ENCODE measurements at regions of chr5 and their contacts with region 1.

Region 1: DNA sequence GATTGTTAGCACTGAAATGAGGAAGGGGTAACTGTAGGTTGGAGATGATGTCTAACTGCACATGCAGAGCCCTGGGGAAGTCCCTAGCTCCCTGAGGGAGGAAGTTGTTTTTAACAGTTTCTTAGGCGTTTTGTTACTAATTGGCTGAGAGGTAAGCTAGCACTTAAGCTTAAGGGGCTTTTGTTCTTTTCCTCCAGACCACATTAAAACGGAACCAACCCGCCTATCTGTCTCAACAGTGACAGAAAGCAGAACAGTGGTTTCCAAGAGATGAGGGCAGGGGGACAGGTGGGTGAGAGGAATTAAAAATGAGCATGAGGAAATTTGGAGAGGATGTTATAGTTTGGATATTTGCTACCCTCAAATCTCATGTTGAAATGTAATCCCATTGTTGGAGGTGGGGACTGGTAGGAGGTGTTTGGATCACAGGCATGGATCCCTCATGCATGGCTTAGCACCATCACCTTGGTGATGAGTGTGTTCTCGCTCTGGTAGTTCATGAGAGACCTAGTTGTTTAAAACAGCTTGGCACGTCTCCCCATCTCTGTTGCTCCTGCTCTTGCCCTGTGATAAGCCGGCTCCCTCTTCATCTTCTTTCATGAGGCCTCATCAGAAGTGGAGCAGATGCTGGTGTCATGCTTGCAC is 38.9 kb downstream of the LYRM7 start:
- DNase-seq: peak; percentile 74
- ATAC-seq: peak; percentile 96
- H3K4me3 Mint-ChIP-seq: peak overlapping the region; percentile 76
- H3K27ac Mint-ChIP-seq: peak overlapping the region; percentile 97
- H3K4me1 Mint-ChIP-seq: peaks cover 68% of the 10 kb centered on the region
- H3K27me3 Mint-ChIP-seq: no peaks in the 10 kb centered on the region
- CTCF ChIP-seq: no peak

Region 2: GRCh38 chr5:131170540-131171275 is 38.9 kb before region 1 on chr5 and contains the start of gene LYRM7:
- CTCF ChIA-PET with region 1: no interaction called
- POLR2A ChIA-PET with region 1: interaction called, 3 read pairs
- intact Hi-C with region 1: loop called (anchors 2 kb)
- DNase-seq: peak; percentile 99
- ATAC-seq: peak; percentile 96
- H3K4me3 Mint-ChIP-seq: peak within 1 kb of the TSS; percentile 98
- H3K27ac Mint-ChIP-seq: peak within 1 kb of the TSS; percentile 96
- H3K4me1 Mint-ChIP-seq: peaks cover 37% of the 10 kb centered on the region
- H3K27me3 Mint-ChIP-seq: no peaks in the 10 kb centered on the region
- CTCF ChIP-seq: no peak
- total RNA-seq, gene LYRM7: 23.2 to 24.0 TPM

Region 3: DNA sequence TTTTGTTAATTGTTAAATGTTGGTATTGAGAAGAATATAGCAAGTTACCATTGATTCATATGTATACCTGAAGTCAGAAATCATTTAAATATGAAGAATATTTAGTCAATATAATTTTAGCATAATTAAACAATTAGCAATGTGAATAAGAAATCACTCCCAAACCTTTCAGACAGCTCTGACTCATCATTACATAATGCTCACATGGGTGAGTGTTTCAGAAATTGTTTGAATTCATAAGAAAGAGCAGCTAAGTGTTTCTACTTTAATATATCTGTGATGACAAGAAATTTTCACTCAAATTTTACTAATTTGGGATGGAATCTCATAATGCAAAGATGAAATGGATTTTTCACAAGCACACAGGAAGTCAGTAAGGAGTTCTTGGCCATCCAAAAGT is 12.3 kb after region 1 on chr5:
- CTCF ChIA-PET with region 1: interaction called, 9 read pairs
- POLR2A ChIA-PET with region 1: interaction called, 13 read pairs
- intact Hi-C with region 1: no loop called
- DNase-seq: no peak
- ATAC-seq: no peak
- H3K4me3 Mint-ChIP-seq: no peak overlapping the region
- H3K27ac Mint-ChIP-seq: no peak overlapping the region
- H3K4me1 Mint-ChIP-seq: peaks cover 27% of the 10 kb centered on the region
- H3K27me3 Mint-ChIP-seq: no peaks in the 10 kb centered on the region
- CTCF ChIP-seq: no peak

Measured in activated CD8-positive, alpha-beta T cell treated with anti-CD3 and anti-CD28 coated beads for 36 hours (primary cell).